Activated CD4-positive, alpha-beta T cell treated with anti-CD3 and anti-CD28 coated beads, Interleukin-2, amount 10 ng/mL, durations not matched to agents 24 days and 14 days (primary cell): ENCODE measurements at regions of chr19 and their contacts with region 1.

Region 1: DNA sequence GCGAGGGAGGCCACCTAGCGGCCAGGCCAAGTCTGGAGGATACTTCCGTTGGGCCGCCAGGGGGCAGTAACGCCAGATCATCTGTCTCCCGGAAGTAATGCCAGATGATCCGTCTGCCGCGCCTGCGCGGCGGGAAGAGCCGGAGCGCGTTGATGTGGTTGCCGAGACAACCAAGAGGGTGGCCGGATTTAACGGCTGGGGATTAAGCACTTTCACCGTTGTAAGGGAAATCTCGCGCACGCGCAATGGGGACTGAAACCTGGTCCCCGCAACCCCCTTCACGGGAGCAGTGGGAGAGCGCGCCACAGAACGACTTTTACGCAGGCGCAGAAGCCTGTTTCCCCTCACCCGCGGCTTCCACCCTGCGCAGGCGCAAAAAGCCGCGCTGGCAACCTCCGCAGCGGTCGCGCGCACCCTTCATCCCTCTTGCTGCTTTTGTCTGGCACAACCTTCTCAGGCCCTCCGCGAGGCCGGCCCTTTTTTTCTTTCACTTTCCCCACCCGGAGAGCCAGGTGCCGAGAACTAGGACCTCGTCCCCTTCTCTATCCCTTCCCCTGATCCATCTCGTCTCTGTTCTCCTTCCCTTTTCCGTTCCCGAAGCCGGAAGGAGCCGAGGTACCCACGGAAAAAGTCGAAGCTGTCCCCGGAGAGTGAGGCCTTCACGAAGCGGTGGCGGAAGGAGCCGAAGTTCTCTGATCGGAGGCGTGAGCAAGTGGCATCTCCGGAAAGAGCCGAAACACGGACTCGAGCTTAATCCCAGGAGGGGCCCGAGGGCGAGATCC is 886 bp upstream of the U2AF2 start:
- DNase-seq: peak; percentile 100
- H3K4me3 Mint-ChIP-seq: peak overlapping the region; percentile 88
- H3K27ac Mint-ChIP-seq: peak overlapping the region; percentile 99
- H3K4me1 Mint-ChIP-seq: peaks cover 42% of the 10 kb centered on the region
- H3K27me3 Mint-ChIP-seq: peaks cover 1% of the 10 kb centered on the region

Region 2: GRCh38 chr19:55494172-55494761 is 159.7 kb before region 1 on chr19:
- intact Hi-C with region 1: no loop called
- DNase-seq: no peak
- H3K4me3 Mint-ChIP-seq: peak overlapping the region; percentile 43
- H3K27ac Mint-ChIP-seq: no peak overlapping the region
- H3K4me1 Mint-ChIP-seq: peaks cover 3% of the 10 kb centered on the region
- H3K27me3 Mint-ChIP-seq: peaks cover 3% of the 10 kb centered on the region

Region 3: GRCh38 chr19:55599468-55600279 is 54.3 kb before region 1 on chr19 and contains the start of gene FIZ1:
- intact Hi-C with region 1: loop called (anchors 1 kb)
- DNase-seq: peak; percentile 99
- H3K4me3 Mint-ChIP-seq: peak within 1 kb of the TSS; percentile 88
- H3K27ac Mint-ChIP-seq: peak within 1 kb of the TSS; percentile 98
- H3K4me1 Mint-ChIP-seq: peaks cover 33% of the 10 kb centered on the region
- H3K27me3 Mint-ChIP-seq: no peaks in the 10 kb centered on the region
- total RNA-seq, gene FIZ1: 20.4 and 21.4 TPM in 2 replicates

Region 4: DNA sequence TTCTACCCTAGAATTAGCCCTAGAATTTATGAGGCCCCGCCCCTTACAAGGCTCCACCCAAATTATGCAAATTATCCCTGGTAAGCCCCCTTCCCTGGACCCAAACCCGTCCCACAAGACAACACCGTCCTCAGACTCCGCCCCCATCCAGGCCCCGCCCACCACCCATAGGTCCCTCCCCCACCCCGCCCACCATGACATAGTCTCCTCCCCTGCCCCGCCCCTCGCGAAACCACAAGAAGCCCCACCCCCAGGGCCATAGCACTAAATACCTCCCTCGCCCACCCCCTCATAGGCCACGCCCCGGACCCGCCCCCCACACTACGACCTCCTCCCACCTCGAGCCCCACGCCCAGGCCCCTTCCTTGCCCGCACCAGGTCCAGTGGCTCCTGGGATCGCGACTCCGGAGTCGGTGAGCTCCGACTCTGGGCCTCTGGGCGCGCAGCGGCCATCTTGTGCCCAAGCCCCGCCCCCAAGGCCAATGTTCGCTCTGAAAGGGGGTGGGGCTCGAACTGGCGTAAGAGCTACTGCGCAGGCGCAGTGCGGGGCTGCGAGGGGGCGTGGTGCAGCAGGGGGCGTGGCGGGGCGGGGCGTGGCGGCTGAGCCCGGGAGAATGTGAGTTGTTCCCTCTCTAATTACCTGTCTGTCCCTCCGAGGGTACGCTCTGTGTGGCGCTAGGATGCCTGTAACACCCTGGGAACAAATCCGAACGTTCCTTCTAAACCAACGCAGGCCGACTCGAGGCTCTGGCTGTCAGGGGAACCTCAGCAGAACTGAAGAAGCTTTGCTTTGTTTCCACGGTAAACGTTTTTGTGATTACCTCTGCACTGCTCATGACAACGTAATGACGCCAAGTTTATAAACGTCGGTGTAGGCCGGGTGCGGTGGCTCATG is 29.6 kb before region 1 on chr19 and contains the start of gene ZNF784:
- intact Hi-C with region 1: loop called (anchors 1 kb)
- DNase-seq: peak; percentile 98
- H3K4me3 Mint-ChIP-seq: peak within 1 kb of the TSS; percentile 96
- H3K27ac Mint-ChIP-seq: peak within 1 kb of the TSS; percentile 99
- H3K4me1 Mint-ChIP-seq: peaks cover 43% of the 10 kb centered on the region
- H3K27me3 Mint-ChIP-seq: peaks cover 13% of the 10 kb centered on the region
- total RNA-seq, gene ZNF784: 3.6 and 3.7 TPM in 2 replicates

Region 5: GRCh38 chr19:55643348-55644176 is 10.4 kb before region 1 on chr19 and contains the start of gene ZNF581:
- intact Hi-C with region 1: loop called (anchors 1 kb)
- DNase-seq: peak; percentile 95
- H3K4me3 Mint-ChIP-seq: peak within 1 kb of the TSS; percentile 90
- H3K27ac Mint-ChIP-seq: peak within 1 kb of the TSS; percentile 98
- H3K4me1 Mint-ChIP-seq: peaks cover 27% of the 10 kb centered on the region
- H3K27me3 Mint-ChIP-seq: no peaks in the 10 kb centered on the region
- total RNA-seq, gene ZNF581: 32.7 and 33.0 TPM in 2 replicates

Region 6: GRCh38 chr19:56140583-56141416 is 486.9 kb after region 1 on chr19 and contains the start of gene ZNF444:
- intact Hi-C with region 1: loop called (anchors 5 kb)
- DNase-seq: peak; percentile 100
- H3K4me3 Mint-ChIP-seq: peak within 1 kb of the TSS; percentile 94
- H3K27ac Mint-ChIP-seq: peak within 1 kb of the TSS; percentile 91
- H3K4me1 Mint-ChIP-seq: peaks cover 36% of the 10 kb centered on the region
- H3K27me3 Mint-ChIP-seq: peaks cover 4% of the 10 kb centered on the region
- total RNA-seq, gene ZNF444: 35.5 and 35.7 TPM in 2 replicates